ENCODE measurements at regions of chr6 and their contacts with region 1.

Region 1: DNA sequence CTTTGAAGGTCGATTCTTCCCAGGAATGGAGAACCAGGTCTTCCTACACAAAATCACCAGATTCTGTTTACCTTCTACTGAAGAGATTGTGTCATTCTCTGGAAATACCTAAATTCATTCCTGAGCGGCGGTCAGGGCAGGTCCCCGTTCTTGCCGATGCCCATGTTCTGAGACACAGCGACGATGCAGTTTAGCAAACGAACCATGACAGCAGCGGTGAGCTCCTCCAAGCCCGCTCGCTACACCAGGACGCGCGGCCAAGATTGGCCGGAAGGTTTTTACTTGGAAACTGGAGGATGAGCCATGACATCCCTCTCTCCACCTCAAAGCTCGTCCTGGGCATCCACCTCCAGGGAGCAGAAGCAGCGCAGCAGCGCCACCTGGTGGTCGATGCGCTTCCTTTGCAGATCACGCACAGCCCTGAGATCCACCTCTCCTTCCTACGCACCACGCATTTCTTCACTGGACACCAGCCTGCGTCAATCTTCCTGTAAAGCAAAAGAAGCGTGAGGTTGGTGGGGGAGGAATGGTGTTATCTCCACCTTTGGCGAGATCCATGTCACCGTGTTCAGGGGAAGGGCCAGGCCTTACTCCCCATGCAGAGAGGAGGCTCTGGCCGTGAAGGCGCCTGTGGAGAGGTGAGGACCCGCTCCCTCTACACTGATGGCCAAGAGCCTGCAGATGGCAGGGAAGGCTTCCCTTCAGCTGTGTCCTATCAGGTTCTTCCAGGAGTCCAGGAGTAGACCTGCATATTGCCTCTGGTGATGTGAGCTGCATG is 9.9 kb upstream of the HLA-B start:
- DNase-seq: peak; percentile 91
- H3K4me3 Mint-ChIP-seq: peak overlapping the region; percentile 76
- H3K27ac Mint-ChIP-seq: peak overlapping the region; percentile 15
- H3K4me1 Mint-ChIP-seq: peaks cover 30% of the 10 kb centered on the region
- H3K27me3 Mint-ChIP-seq: no peaks in the 10 kb centered on the region

Region 2: DNA sequence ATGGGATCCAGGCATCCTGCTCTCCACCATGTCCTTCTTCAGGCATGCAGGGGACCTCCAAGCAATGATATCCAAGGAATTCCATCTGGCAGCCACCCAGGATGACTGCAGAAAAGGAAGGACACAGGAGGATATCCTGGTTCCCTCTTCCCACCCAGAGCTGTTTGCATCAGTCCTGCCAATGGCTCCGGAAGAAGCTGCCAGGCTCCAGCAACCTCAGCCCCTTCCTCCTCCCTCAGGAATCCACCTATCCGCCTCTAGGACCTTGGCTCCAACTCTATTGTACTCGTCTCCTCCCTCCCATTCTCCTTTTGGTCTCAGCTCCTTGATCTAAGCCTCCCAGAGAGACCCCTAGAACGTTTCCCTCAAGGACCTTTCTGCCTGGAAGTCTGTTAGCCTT is 227.3 kb before region 1 on chr6:
- CTCF ChIA-PET with region 1: interaction called, 16 read pairs
- intact Hi-C with region 1: loop called (anchors 1 kb)
- DNase-seq: no peak
- H3K4me3 Mint-ChIP-seq: no peak overlapping the region
- H3K27ac Mint-ChIP-seq: no peak overlapping the region
- H3K4me1 Mint-ChIP-seq: peaks cover 4% of the 10 kb centered on the region
- H3K27me3 Mint-ChIP-seq: no peaks in the 10 kb centered on the region

Region 3: DNA sequence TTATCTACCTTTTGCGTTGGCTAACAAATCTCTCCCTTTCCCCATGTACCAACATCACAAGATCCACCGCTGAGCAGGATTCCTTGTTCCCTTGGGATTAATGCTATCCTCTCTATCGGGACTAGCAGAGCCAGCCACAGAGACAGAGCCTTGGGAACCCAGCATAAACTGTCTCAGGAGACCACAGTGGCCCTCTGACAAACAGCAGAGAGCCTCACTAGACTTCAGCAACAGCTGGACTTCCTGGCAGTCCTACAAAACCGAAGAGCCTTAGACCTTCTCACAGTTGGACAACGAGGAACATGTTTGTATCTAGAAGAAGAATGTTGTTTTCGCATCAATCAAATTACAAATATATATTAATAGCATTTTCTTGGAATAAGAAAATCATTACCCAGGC is 156.8 kb before region 1 on chr6:
- CTCF ChIA-PET with region 1: interaction called, 15 read pairs
- intact Hi-C with region 1: no loop called
- DNase-seq: no peak
- H3K4me3 Mint-ChIP-seq: no peak overlapping the region
- H3K27ac Mint-ChIP-seq: no peak overlapping the region
- H3K4me1 Mint-ChIP-seq: peaks cover 5% of the 10 kb centered on the region
- H3K27me3 Mint-ChIP-seq: no peaks in the 10 kb centered on the region

Region 4: DNA sequence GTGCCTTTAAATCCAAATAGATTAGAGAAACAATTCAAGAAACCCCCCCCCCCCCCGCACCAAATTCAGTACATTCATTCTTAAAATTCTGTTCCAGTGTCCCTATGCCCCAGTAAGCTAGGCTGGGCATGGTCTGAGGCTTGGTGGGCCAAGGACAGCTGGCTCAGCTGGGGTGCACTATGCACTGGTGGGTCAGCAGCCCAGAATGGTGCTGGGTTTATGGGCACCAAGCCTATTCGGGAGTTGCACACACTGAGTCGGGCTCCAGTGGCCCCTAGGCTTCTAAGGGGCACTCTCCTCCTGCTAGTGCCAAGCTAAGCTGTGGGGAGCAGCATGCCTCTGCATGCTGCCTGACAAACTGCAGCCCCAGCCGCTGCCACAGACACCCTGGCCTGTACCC is 10.1 kb after region 1 on chr6:
- CTCF ChIA-PET with region 1: interaction called, 17 read pairs
- intact Hi-C with region 1: no loop called
- DNase-seq: no peak
- H3K4me3 Mint-ChIP-seq: no peak overlapping the region
- H3K27ac Mint-ChIP-seq: no peak overlapping the region
- H3K4me1 Mint-ChIP-seq: peaks cover 2% of the 10 kb centered on the region
- H3K27me3 Mint-ChIP-seq: peaks cover 9% of the 10 kb centered on the region